BJ (cell line): ENCODE measurements at regions of chr5 and their contacts with region 1.

Region 1: DNA sequence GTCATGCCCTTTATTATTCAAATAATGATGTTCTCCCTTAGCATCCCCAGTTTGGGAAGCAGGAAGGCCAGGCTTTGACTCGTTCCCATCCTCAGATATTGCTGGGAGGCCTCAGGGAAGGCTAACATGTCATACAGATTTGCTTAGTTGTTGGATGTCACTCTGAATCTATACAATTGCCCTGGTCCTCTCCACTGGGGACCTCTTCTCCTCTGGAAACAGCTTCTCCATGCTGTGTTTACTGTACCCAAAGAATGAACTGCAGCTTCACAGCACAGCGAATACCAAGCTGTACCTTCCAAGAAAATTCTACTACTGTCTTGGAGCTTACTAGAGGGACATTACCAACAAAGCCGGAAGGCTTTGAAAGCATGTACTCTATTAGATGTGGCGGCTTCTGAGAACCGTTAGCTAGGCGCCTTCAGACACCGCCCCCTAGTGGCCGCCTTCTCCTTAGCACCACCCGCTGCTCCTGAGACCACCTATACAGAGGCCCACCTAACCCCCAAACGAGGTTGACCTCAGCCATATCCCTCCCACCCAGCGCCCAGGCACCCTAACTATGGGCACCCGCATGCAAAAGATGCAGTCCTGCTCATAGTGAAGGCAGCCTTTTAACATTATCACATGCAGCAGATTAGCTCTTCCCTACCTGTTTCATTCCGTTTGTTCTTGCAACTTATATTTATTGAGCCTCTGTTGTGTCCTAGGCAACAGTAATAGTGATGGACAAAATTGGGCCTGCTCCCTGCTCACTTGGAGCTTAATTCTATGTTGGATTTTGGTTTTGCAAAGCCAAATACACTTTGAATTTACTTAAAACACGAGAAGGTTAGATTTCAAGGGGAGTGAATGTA is 34.9 kb upstream of the FOXI1 start:
- DNase-seq: no peak
- H3K4me3 ChIP-seq: no peak overlapping the region
- H3K27me3 ChIP-seq: no peaks in the 10 kb centered on the region
- CTCF ChIP-seq: peak; percentile 85

Region 2: GRCh38 chr5:169696621-169697517 is 373.9 kb before region 1 on chr5:
- CTCF ChIA-PET with region 1: interaction called, 34 read pairs
- POLR2A ChIA-PET with region 1: no interaction called
- DNase-seq: no peak
- H3K4me3 ChIP-seq: no peak overlapping the region
- H3K27me3 ChIP-seq: no peaks in the 10 kb centered on the region
- CTCF ChIP-seq: no peak

Region 3: GRCh38 chr5:169701910-169702451 is 368.8 kb before region 1 on chr5:
- CTCF ChIA-PET with region 1: interaction called, 34 read pairs
- POLR2A ChIA-PET with region 1: no interaction called
- DNase-seq: no peak
- H3K4me3 ChIP-seq: no peak overlapping the region
- H3K27me3 ChIP-seq: no peaks in the 10 kb centered on the region
- CTCF ChIP-seq: peak; percentile 62

Region 4: DNA sequence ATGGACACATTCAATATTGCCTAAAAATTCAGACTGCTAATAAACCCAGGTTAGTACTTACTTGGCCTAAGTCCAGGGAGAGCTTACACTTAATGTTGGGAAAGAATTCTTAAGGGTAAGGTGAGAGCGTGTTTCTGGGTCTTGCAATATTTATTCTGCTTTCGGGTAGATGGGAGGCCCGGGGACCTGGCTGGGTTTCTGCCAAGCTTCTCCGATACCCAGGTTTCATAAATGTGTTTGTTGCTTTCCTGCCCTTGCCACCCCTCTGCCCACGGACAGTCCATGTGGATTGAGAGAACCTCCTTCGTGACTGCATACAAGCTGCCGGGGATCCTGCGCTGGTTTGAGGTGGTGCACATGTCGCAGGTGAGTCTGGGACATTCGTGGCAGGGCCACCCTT is 13.5 kb before region 1 on chr5:
- CTCF ChIA-PET with region 1: interaction called, 17 read pairs
- POLR2A ChIA-PET with region 1: no interaction called
- DNase-seq: no peak
- H3K4me3 ChIP-seq: no peak overlapping the region
- H3K27me3 ChIP-seq: 0 out of 2 replicates have a peak, but pooled peaks cover 2% of the 10 kb centered on the region
- CTCF ChIP-seq: no peak

Region 5: DNA sequence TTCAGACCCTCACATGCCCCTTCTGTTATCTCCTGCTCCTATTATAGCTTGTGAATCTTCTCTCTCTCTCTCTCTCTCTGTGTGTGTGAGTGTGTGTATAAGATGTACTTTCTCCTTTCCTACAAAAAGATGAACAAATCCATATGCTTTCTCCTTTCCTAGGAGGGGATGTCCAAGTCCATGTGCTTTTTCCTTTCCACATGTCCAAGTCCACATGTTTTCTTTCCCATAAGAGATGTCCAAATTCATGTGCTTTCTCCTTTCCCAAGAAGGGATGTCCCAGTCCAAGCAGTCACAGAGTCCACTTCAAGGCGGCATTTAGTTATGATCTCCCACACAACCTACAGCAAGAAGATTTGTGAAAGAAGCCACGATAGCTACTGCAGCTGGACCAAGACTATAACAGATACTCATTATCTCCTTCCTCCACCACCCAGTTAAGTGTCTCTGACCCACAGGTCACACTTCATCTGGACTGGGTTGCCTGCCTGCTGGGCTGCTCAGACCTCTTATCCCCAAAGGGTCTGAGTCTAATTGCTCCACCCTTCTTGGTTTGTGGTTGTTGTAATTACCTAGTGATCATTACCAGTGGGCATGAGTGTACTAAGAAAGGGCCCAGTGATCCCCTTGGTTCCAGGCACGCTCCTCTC is 16.5 kb after region 1 on chr5:
- CTCF ChIA-PET with region 1: interaction called, 35 read pairs
- POLR2A ChIA-PET with region 1: no interaction called
- DNase-seq: no peak
- H3K4me3 ChIP-seq: no peak overlapping the region
- H3K27me3 ChIP-seq: peaks cover 1% of the 10 kb centered on the region; the same call in 1 of the 2 replicates
- CTCF ChIP-seq: no peak

Region 6: GRCh38 chr5:170100066-170100943 is 29.5 kb after region 1 on chr5:
- CTCF ChIA-PET with region 1: interaction called, 13 read pairs
- POLR2A ChIA-PET with region 1: no interaction called
- DNase-seq: peak; percentile 15
- H3K4me3 ChIP-seq: no peak overlapping the region
- H3K27me3 ChIP-seq: 0 out of 2 replicates have a peak, but pooled peaks cover 1% of the 10 kb centered on the region
- CTCF ChIP-seq: peak; percentile 68